T-cell (primary cell): ENCODE measurements at regions of chr15 and their contacts with region 1.

Region 1: DNA sequence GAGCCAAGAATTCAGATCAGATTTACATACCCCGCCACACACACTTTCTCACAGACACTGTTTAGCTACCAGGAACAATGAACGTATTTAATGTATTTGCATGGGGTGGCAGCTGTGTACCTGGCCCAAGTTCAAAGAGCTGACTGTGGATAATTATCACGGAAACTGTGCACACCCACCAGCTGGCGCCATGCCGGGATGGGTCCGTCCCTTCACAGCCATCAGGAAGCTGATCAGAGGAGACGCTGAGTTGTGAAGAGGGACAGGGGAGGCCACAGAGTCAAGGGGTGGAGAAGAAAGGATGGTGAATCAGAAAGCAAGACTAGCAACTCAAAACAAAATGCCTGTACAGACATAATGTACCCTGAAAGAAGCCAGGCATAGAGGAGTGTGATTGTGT is 13.1 kb upstream of the PLA2G4D start:
- DNase-seq: peak in 2 of 35 experiments; percentile 6 to 10
- ATAC-seq: peak in 1 of 4 experiments; percentile 37
- H3K4me3 ChIP-seq: no peak overlapping the region
- H3K4me3 Mint-ChIP-seq: no peak overlapping the region
- H3K27ac ChIP-seq: no peak overlapping the region
- H3K27ac Mint-ChIP-seq: no peak overlapping the region
- H3K4me1 ChIP-seq: peaks cover 0 to 4% of the 10 kb centered on the region in 2 experiments
- H3K4me1 Mint-ChIP-seq: peaks cover 6 to 11% (median 7%) of the 10 kb centered on the region in 3 donors
- H3K27me3 ChIP-seq: peaks cover 0 to 18% of the 10 kb centered on the region in 2 experiments
- H3K27me3 Mint-ChIP-seq: peaks cover 25 to 34% of the 10 kb centered on the region in 2 donors

Region 2: GRCh38 chr15:40793216-40793989 is 1314.1 kb before region 1 on chr15:
- CTCF ChIA-PET with region 1: no interaction called
- POLR2A ChIA-PET with region 1: interaction called in 1 of 2 experiments, 10 read pairs
- DNase-seq: no peak
- ATAC-seq: no peak
- H3K4me3 ChIP-seq: no peak overlapping the region
- H3K4me3 Mint-ChIP-seq: no peak overlapping the region
- H3K27ac ChIP-seq: no peak overlapping the region
- H3K27ac Mint-ChIP-seq: no peak overlapping the region
- H3K4me1 ChIP-seq: peaks cover 0 to 5% of the 10 kb centered on the region in 2 experiments
- H3K4me1 Mint-ChIP-seq: peaks cover 18 to 31% (median 25%) of the 10 kb centered on the region in 3 donors
- H3K27me3 ChIP-seq: no peaks in the 10 kb centered on the region
- H3K27me3 Mint-ChIP-seq: no peaks in the 10 kb centered on the region

Region 3: GRCh38 chr15:43808960-43809678 is 1701.6 kb after region 1 on chr15:
- CTCF ChIA-PET with region 1: no interaction called
- POLR2A ChIA-PET with region 1: no interaction called
- DNase-seq: no peak
- ATAC-seq: no peak
- H3K4me3 ChIP-seq: no peak overlapping the region
- H3K4me3 Mint-ChIP-seq: no peak overlapping the region
- H3K27ac ChIP-seq: no peak overlapping the region
- H3K27ac Mint-ChIP-seq: no peak overlapping the region
- H3K4me1 ChIP-seq: no peaks in the 10 kb centered on the region
- H3K4me1 Mint-ChIP-seq: peaks cover 2 to 4% (median 3%) of the 10 kb centered on the region in 3 donors
- H3K27me3 ChIP-seq: no peaks in the 10 kb centered on the region
- H3K27me3 Mint-ChIP-seq: no peaks in the 10 kb centered on the region